CD14-positive monocyte (primary cell): ENCODE measurements at regions of chr5 and their contacts with region 1.

Region 1: DNA sequence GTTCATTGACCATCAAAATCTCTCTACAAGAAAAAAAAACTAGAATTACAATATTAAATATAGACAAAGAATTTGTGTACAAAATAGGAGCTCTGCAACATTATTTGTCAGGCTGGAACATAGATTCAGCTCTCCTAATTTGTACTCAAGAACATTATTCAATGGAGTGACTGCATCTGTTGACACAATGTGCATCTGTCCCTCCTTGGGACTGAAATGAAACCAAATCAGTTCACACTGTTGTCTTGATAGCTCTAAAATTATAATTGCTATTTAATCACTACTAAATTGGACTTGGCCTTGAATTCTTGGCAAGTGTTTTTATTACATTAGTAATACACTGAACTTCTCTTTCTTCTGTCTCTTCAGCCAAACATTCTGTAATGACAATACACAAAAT is 47.7 kb downstream of the FTMT start:
- DNase-seq: no peak
- H3K4me3 ChIP-seq: no peak overlapping the region
- H3K4me3 Mint-ChIP-seq: no peak overlapping the region
- H3K27ac ChIP-seq: no peak overlapping the region
- H3K27ac Mint-ChIP-seq: no peak overlapping the region
- H3K4me1 ChIP-seq: no peaks in the 10 kb centered on the region
- H3K4me1 Mint-ChIP-seq: no peaks in the 10 kb centered on the region
- H3K27me3 ChIP-seq: no peaks in the 10 kb centered on the region
- H3K27me3 Mint-ChIP-seq: no peaks in the 10 kb centered on the region
- CTCF ChIP-seq: no peak

Region 2: DNA sequence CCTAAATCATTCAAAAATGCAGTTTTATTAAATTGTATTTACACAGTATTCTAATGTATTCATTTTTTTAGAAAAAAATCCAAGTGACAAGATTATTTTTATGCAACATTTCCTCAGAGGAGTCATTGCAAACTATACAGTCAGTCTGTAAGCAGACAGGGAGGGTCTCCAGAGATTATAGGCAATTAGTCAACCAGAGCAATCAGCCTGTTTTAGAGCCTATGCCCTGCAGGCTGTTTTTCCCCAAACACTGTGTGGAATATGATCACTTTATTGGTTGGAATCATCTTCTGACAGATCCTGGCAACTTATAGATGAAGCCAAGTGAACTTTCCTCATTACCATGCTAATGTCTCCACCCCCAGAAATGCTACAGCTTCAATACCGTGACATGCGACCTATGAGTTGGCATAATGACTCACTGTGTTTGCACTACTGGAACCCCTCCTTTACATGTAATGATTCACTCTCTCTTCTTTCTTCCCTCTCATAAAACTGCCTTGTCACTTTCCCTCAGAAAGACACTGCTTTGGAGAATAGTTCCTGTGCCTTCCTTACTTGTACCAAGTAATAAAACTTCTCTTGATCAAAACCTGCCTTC is 625.4 kb before region 1 on chr5:
- intact Hi-C with region 1: loop called in 1 of 2 experiments (anchors 10 kb)
- DNase-seq: peak in 1 of 3 donors; percentile 8
- H3K4me3 ChIP-seq: no peak overlapping the region
- H3K4me3 Mint-ChIP-seq: no peak overlapping the region
- H3K27ac ChIP-seq: no peak overlapping the region
- H3K27ac Mint-ChIP-seq: no peak overlapping the region
- H3K4me1 ChIP-seq: no peaks in the 10 kb centered on the region
- H3K4me1 Mint-ChIP-seq: no peaks in the 10 kb centered on the region
- H3K27me3 ChIP-seq: no peaks in the 10 kb centered on the region
- H3K27me3 Mint-ChIP-seq: no peaks in the 10 kb centered on the region
- CTCF ChIP-seq: no peak

Region 3: GRCh38 chr5:121559832-121560231 is 339.5 kb before region 1 on chr5:
- intact Hi-C with region 1: no loop called
- DNase-seq: no peak
- H3K4me3 ChIP-seq: no peak overlapping the region
- H3K4me3 Mint-ChIP-seq: no peak overlapping the region
- H3K27ac ChIP-seq: no peak overlapping the region
- H3K27ac Mint-ChIP-seq: no peak overlapping the region
- H3K4me1 ChIP-seq: no peaks in the 10 kb centered on the region
- H3K4me1 Mint-ChIP-seq: no peaks in the 10 kb centered on the region
- H3K27me3 ChIP-seq: no peaks in the 10 kb centered on the region
- H3K27me3 Mint-ChIP-seq: no peaks in the 10 kb centered on the region
- CTCF ChIP-seq: no peak

Region 4: GRCh38 chr5:121885630-121886029 is 13.7 kb before region 1 on chr5:
- intact Hi-C with region 1: no loop called
- DNase-seq: no peak
- H3K4me3 ChIP-seq: no peak overlapping the region
- H3K4me3 Mint-ChIP-seq: no peak overlapping the region
- H3K27ac ChIP-seq: no peak overlapping the region
- H3K27ac Mint-ChIP-seq: no peak overlapping the region
- H3K4me1 ChIP-seq: no peaks in the 10 kb centered on the region
- H3K4me1 Mint-ChIP-seq: no peaks in the 10 kb centered on the region
- H3K27me3 ChIP-seq: no peaks in the 10 kb centered on the region
- H3K27me3 Mint-ChIP-seq: no peaks in the 10 kb centered on the region
- CTCF ChIP-seq: no peak